Calu3 (cell line): ENCODE measurements at regions of chr3 and their contacts with region 1.

Region 1: GRCh38 chr3:24264748-24265158 is 229.9 kb downstream of the THRB start:
- DNase-seq: peak; percentile 41
- H3K4me3 Mint-ChIP-seq: no peak overlapping the region
- H3K27ac Mint-ChIP-seq: peak overlapping the region; percentile 29
- H3K4me1 Mint-ChIP-seq: peaks cover 16% of the 10 kb centered on the region
- H3K27me3 Mint-ChIP-seq: no peaks in the 10 kb centered on the region
- CTCF ChIP-seq: peak; percentile 19

Region 2: DNA sequence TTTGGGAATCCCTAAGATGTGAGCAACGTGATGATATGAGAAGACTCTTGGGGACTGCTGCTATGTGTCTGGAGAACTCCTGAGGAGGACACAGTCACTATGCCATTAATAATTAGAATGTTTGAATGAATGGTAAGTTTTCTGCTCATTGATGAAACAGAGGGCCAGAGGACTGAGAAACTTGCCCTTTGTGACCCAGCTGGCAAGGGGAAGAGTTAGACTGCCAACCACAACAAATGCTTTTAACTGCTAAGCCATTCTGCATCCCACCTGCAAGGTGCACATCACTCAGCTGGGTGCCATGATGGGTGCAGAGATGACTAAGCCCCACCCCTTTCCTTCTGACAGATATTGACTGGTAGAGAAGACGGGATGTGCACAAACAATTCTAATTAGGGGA is 19.7 kb before region 1 on chr3:
- CTCF ChIA-PET with region 1: no interaction called
- intact Hi-C with region 1: no loop called
- DNase-seq: no peak
- H3K4me3 Mint-ChIP-seq: no peak overlapping the region
- H3K27ac Mint-ChIP-seq: no peak overlapping the region
- H3K4me1 Mint-ChIP-seq: no peaks in the 10 kb centered on the region
- H3K27me3 Mint-ChIP-seq: no peaks in the 10 kb centered on the region
- CTCF ChIP-seq: no peak

Region 3: DNA sequence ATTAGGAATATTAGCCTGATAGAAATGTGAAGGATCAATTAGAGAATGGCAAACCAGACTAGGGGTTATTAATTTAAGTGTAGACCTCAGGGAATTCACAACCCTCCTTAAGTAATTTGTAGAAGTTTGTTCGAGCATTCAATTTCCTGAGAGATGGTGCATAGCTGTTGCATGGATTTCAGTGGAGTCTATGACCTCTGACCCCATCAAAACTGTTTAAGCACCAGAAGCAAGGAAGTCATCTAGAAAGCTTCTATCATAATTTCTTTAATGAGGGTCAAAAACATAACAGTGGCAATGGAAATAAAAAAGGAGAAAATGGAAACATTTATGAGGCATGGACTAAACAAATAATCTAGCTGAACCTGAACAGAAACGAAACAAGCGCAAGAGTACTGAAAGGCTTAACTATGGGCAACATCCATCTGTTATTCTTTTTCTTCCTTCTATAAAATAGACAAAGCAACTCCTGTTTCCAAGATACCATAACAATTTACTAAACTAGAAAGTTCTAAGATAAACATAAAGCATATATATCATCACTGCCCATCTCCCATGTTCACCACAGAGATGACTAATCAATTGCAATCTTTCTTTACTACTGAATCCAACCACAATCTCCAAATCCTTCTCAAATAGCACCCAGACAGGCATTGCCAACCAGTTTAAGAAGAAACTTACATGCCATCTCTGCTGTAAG is 78.5 kb after region 1 on chr3:
- CTCF ChIA-PET with region 1: no interaction called
- intact Hi-C with region 1: no loop called
- DNase-seq: no peak
- H3K4me3 Mint-ChIP-seq: no peak overlapping the region
- H3K27ac Mint-ChIP-seq: no peak overlapping the region
- H3K4me1 Mint-ChIP-seq: peaks cover 12% of the 10 kb centered on the region
- H3K27me3 Mint-ChIP-seq: no peaks in the 10 kb centered on the region
- CTCF ChIP-seq: no peak

Region 4: DNA sequence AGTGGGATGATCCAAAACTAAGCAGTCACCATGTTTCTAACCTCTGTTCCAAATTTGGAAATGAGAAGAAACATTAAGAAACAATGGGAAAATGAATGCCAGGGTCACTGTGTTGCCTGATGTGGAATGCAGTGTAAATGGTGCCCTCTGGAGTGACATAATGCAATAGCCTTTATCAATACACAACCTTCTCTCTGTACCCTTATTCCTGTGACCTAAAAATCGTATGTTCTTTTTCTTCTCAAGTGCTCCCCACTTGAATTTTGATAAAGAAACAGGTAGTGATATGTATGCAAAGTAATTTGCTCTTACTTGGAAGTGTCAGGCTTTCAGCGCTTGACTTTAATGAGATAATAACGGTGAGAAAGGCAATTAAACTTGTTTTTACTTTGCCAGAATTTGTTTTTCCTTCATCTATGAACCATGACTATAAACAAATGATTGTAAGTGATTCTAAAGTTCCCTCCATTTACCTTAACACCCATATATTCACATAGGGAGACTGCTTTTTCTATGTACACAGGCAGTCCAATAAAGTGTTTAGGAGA is 375.7 kb after region 1 on chr3:
- CTCF ChIA-PET with region 1: no interaction called
- intact Hi-C with region 1: loop called (anchors 2 kb)
- DNase-seq: peak; percentile 32
- H3K4me3 Mint-ChIP-seq: no peak overlapping the region
- H3K27ac Mint-ChIP-seq: no peak overlapping the region
- H3K4me1 Mint-ChIP-seq: peaks cover 20% of the 10 kb centered on the region
- H3K27me3 Mint-ChIP-seq: no peaks in the 10 kb centered on the region
- CTCF ChIP-seq: peak; percentile 59